CD4-positive, alpha-beta memory T cell (primary cell): ENCODE measurements at regions of chr15 and their contacts with region 1.

Region 1: GRCh38 chr15:84633311-84634227 is 20.5 kb downstream of the WDR73 start:
- DNase-seq: peak; percentile 62 to 68 (median 67)
- H3K4me3 ChIP-seq: peak overlapping the region; percentile 63 to 91
- H3K4me3 Mint-ChIP-seq: peak overlapping the region; percentile 91 to 97 (median 95)
- H3K27ac ChIP-seq: peak overlapping the region; percentile 75
- H3K27ac Mint-ChIP-seq: peak overlapping the region; percentile 91 to 97 (median 96)
- H3K4me1 ChIP-seq: peaks cover 40% of the 10 kb centered on the region
- H3K4me1 Mint-ChIP-seq: peaks cover 28 to 56% (median 44%) of the 10 kb centered on the region in 4 donors
- H3K27me3 ChIP-seq: no peaks in the 10 kb centered on the region
- H3K27me3 Mint-ChIP-seq: no peaks in the 10 kb centered on the region

Region 2: DNA sequence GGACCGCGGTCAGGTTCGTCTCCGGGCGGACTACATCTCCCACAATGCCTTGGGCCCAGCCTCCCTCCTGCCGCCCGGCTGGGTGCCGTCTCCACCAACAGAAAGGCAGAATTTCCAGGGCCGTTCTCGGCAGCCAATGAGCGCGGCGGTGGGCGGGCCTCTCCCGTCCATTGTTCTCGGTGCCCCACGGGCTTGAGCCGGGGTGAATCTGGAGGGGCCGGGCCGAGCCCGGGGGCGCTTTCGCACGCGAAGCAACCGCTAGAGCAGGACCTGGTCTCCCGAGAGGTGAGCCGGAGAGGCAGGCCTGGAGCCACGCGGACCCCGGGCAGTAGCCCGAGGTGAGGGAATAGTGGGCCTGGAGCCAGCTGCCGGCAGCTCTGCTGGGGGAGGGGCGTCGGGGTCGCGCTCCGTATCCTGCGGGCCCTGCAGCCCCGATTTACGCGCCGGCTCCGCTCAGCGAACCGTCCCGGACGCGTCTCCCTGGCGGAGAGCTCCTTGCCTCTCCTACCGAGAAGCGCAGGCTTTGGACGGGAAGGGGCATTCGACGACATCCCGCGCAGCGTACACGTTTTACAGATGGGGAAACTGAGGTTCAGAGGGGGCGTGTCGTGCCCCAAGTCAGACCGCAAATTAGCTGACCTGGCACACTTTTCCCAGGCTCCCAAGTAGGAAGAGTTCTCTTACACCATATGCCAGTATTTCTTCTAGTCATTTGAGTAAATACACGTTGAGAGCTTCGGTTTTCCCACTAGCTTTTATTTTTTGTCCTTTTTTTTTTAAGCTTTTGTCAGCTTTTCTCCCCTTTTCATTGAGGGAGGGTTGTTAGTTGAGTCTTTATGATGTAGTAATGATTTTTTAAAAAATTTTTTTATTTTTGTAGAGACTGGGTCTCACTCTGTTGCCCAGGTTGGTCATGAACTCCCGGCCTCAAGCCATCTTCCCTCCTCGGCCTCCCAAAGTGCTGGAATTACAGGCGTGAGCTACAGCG is 32.4 kb before region 1 on chr15 and contains the start of gene ZSCAN2:
- CTCF ChIA-PET with region 1: interaction called, 22 read pairs
- POLR2A ChIA-PET with region 1: interaction called, 39 read pairs
- intact Hi-C with region 1: loop called (anchors 1 kb)
- DNase-seq: peak; percentile 89 to 94 (median 91)
- H3K4me3 ChIP-seq: peak within 1 kb of the TSS; percentile 85 to 93
- H3K4me3 Mint-ChIP-seq: peak within 1 kb of the TSS; percentile 91 to 99 (median 96)
- H3K27ac ChIP-seq: peak within 1 kb of the TSS; percentile 59
- H3K27ac Mint-ChIP-seq: peak within 1 kb of the TSS; percentile 83 to 96 (median 92)
- H3K4me1 ChIP-seq: peaks cover 50% of the 10 kb centered on the region
- H3K4me1 Mint-ChIP-seq: peaks cover 47 to 77% (median 64%) of the 10 kb centered on the region in 4 donors
- H3K27me3 ChIP-seq: no peaks in the 10 kb centered on the region
- H3K27me3 Mint-ChIP-seq: no peaks in the 10 kb centered on the region
- total RNA-seq, gene ZSCAN2: 11.4 to 14.1 TPM

Region 3: DNA sequence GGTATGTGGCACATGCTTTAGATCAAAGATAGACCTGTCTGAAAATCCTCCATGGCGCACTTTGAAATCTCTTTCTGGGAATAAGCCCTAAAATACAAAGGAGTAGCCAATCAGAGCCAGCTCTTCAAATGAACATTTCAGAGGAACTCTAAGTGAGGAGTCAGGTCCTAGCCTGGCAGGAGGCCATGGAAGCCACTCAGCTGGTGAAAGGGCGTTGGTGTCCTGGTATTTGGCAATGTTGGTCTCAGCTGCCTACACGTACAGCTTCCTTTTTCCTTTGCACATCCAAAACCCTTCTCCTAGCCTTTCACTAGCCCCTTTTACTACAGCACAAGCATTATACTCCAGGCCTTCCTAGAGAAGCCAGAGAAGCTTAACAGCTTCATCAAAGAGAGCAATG is 15.0 kb after region 1 on chr15:
- CTCF ChIA-PET with region 1: interaction called, 12 read pairs
- POLR2A ChIA-PET with region 1: interaction called, 101 read pairs
- intact Hi-C with region 1: no loop called
- DNase-seq: no peak
- H3K4me3 ChIP-seq: no peak overlapping the region
- H3K4me3 Mint-ChIP-seq: no peak overlapping the region
- H3K27ac ChIP-seq: no peak overlapping the region
- H3K27ac Mint-ChIP-seq: peak overlapping the region in 6 of 7 donors; percentile 4 to 91 (median 36)
- H3K4me1 ChIP-seq: peaks cover 21% of the 10 kb centered on the region
- H3K4me1 Mint-ChIP-seq: peaks cover 14 to 34% (median 20%) of the 10 kb centered on the region in 4 donors
- H3K27me3 ChIP-seq: no peaks in the 10 kb centered on the region
- H3K27me3 Mint-ChIP-seq: no peaks in the 10 kb centered on the region

Region 4: GRCh38 chr15:84716036-84716799 is 82.6 kb after region 1 on chr15 and contains the start of gene SEC11A:
- CTCF ChIA-PET with region 1: interaction called, 6 read pairs
- POLR2A ChIA-PET with region 1: interaction called, 26 read pairs
- intact Hi-C with region 1: loop called (anchors 1 kb)
- DNase-seq: peak; percentile 89 to 95 (median 92)
- H3K4me3 ChIP-seq: peak within 1 kb of the TSS; percentile 91 to 97
- H3K4me3 Mint-ChIP-seq: peak within 1 kb of the TSS; percentile 94 to 100 (median 96)
- H3K27ac ChIP-seq: peak within 1 kb of the TSS; percentile 85
- H3K27ac Mint-ChIP-seq: peak within 1 kb of the TSS; percentile 88 to 99 (median 97)
- H3K4me1 ChIP-seq: peaks cover 55% of the 10 kb centered on the region
- H3K4me1 Mint-ChIP-seq: peaks cover 33 to 66% (median 45%) of the 10 kb centered on the region in 4 donors
- H3K27me3 ChIP-seq: no peaks in the 10 kb centered on the region
- H3K27me3 Mint-ChIP-seq: no peaks in the 10 kb centered on the region
- total RNA-seq, gene SEC11A: 85.0 to 86.8 TPM

Region 5: GRCh38 chr15:84734794-84735479 is 101.4 kb after region 1 on chr15:
- CTCF ChIA-PET with region 1: interaction called, 3 read pairs
- POLR2A ChIA-PET with region 1: interaction called, 18 read pairs
- intact Hi-C with region 1: no loop called
- DNase-seq: peak; percentile 72 to 88 (median 77)
- H3K4me3 ChIP-seq: peak overlapping the region; percentile 25 to 46
- H3K4me3 Mint-ChIP-seq: peak overlapping the region; percentile 77 to 90 (median 81)
- H3K27ac ChIP-seq: peak overlapping the region; percentile 41
- H3K27ac Mint-ChIP-seq: peak overlapping the region; percentile 84 to 95 (median 93)
- H3K4me1 ChIP-seq: peaks cover 53% of the 10 kb centered on the region
- H3K4me1 Mint-ChIP-seq: peaks cover 29 to 50% (median 38%) of the 10 kb centered on the region in 4 donors
- H3K27me3 ChIP-seq: no peaks in the 10 kb centered on the region
- H3K27me3 Mint-ChIP-seq: no peaks in the 10 kb centered on the region

Region 6: GRCh38 chr15:84981054-84981710 is 347.6 kb after region 1 on chr15:
- CTCF ChIA-PET with region 1: no interaction called
- POLR2A ChIA-PET with region 1: interaction called, 6 read pairs
- intact Hi-C with region 1: loop called (anchors 1 kb)
- DNase-seq: peak; percentile 95 to 99 (median 98)
- H3K4me3 ChIP-seq: peak overlapping the region; percentile 43 to 86
- H3K4me3 Mint-ChIP-seq: peak overlapping the region; percentile 89 to 98 (median 95)
- H3K27ac ChIP-seq: peak overlapping the region; percentile 83
- H3K27ac Mint-ChIP-seq: peak overlapping the region; percentile 94 to 98 (median 97)
- H3K4me1 ChIP-seq: peaks cover 42% of the 10 kb centered on the region
- H3K4me1 Mint-ChIP-seq: peaks cover 24 to 51% (median 38%) of the 10 kb centered on the region in 4 donors
- H3K27me3 ChIP-seq: no peaks in the 10 kb centered on the region
- H3K27me3 Mint-ChIP-seq: no peaks in the 10 kb centered on the region